Pancreas (tissue), 10 donors: ENCODE measurements at regions of chr4 and their contacts with region 1.

Region 1: DNA sequence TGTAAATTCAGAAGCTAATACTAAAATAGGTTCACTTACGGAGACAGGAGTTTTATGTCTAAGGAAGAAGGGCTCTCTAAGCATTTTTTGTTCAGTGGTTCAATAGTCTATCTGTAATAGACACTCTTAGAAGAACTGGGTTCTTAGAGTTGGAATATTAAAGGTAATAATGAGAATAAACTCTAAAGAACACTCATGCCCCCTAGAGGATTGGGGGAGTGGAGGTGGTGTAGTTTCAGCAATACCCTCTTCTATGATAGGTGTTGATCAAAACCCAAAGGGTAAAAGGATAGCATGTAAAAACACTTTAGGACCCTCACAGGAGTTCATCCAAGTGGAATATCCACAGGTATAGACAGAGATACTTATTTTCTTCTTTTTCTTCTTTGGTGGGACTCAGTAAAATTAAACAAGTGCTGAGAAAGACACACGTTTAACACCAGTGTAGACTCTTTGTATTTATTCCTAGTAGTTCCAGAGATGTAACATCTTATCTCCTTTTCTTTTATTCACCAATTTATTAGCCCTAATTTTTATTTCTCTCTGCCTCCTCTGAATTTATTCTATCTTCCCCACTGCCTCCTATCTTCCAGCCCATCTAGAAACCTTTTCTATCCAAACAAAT is 25.7 kb upstream of the MND1 start:
- DNase-seq: peak in 1 of 6 donors; percentile 35
- ATAC-seq: peak; percentile 63 to 93 (median 92)
- H3K4me3 ChIP-seq: no peak overlapping the region
- H3K27ac ChIP-seq: no peak overlapping the region
- H3K4me1 ChIP-seq: no peaks in the 10 kb centered on the region
- H3K27me3 ChIP-seq: no peaks in the 10 kb centered on the region
- CTCF ChIP-seq: peak in 3 of 4 donors; percentile 22 to 61 (median 57)

Region 2: GRCh38 chr4:153142700-153143438 is 175.9 kb before region 1 on chr4:
- intact Hi-C with region 1: loop called in 2 of 3 experiments (anchors 5 to 10 kb)
- DNase-seq: peak; percentile 67 to 84 (median 82)
- ATAC-seq: peak; percentile 86 to 93 (median 91)
- H3K4me3 ChIP-seq: no peak overlapping the region
- H3K27ac ChIP-seq: peak overlapping the region in 2 of 4 donors; percentile 62 to 69
- H3K4me1 ChIP-seq: peaks cover 5 to 13% (median 10%) of the 10 kb centered on the region in 3 donors
- H3K27me3 ChIP-seq: no peaks in the 10 kb centered on the region
- CTCF ChIP-seq: peak in 3 of 4 donors; percentile 65 to 70 (median 69)

Region 3: DNA sequence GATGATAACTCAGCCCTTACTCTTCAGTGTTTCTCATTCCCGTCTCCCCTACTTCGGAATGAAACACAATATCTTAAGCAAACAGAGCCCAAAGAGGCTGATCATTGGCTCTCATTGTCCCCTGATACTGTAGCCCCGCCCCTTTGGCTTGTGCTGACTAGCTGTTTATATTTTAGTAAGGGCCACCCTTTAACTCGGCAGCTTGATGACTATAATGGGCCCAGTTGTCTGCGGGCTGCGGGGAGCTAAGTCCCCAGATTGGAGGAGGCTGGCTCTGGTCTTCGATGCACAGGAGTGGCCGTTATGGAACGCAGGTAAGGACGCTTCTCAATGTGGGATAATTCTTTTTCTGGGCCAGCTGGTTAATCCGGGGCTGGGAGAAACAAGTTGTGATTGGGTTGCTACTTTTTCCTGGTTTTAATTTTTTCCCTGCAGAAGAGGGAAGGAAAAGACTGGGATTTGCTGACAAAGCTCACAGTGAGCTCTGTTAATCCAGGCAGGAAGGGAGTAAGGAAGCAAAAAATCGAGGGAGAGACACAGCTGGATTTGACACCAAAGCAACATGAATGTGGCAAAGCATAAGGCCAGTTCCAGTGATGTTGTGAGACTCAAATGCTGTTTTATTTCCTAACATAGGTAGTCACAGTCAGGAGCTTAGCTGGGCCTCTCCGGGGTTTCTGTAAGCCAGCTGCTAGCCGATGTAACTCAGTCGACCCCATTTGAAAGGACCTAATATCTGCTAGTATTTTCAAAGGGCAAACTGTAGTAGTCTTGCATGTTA is 114.4 kb before region 1 on chr4 and contains the start of gene TRIM2:
- intact Hi-C with region 1: loop called in 1 of 3 experiments (anchors 5 kb)
- DNase-seq: peak; percentile 78 to 91 (median 84)
- ATAC-seq: peak; percentile 89 to 94 (median 92)
- H3K4me3 ChIP-seq: peak within 1 kb of the TSS; percentile 28 to 49 (median 40)
- H3K27ac ChIP-seq: peak within 1 kb of the TSS; percentile 61 to 87 (median 75)
- H3K4me1 ChIP-seq: peaks cover 0 to 3% (median 0%) of the 10 kb centered on the region in 3 donors
- H3K27me3 ChIP-seq: no peaks in the 10 kb centered on the region
- CTCF ChIP-seq: no peak
- total RNA-seq, gene TRIM2: 17.6 to 39.2 (median 25.5) TPM